Cardiac septum (tissue), 1 donor: ENCODE measurements at regions of chr4 and their contacts with region 1.

Region 1: GRCh38 chr4:169485791-169486742 is 126.3 kb downstream of the NEK1 start:
- DNase-seq: no peak

Region 2: GRCh38 chr4:169024762-169025161 is 461.3 kb before region 1 on chr4:
- intact Hi-C with region 1: loop called (anchors 5 kb)
- DNase-seq: no peak

Region 3: GRCh38 chr4:169311643-169312365 is 174.3 kb before region 1 on chr4:
- intact Hi-C with region 1: loop called (anchors 10 kb)
- DNase-seq: no peak

Region 4: GRCh38 chr4:169345194-169345787 is 140.8 kb before region 1 on chr4:
- intact Hi-C with region 1: no loop called
- DNase-seq: no peak

Region 5: DNA sequence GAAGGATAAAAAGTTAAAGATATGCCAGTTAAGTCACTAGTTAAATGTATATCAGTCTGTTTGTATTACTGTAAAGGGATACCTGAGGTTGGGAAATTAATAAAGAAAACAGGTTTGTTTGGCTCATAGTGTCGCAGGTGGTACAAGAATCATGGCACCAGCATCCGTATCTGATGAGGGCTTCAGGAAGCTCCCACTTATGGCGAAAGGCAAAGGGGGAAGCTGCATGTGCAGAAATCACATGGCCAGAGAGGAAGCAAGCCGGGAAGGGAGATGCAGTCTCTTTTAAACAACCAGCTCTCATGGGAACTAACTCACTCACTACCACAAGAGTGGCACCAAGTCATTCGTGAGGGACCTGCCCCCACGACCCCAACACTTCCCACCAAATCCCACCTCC is 123.5 kb before region 1 on chr4:
- intact Hi-C with region 1: no loop called
- DNase-seq: no peak

Region 6: GRCh38 chr4:169464080-169464479 is 22.0 kb before region 1 on chr4:
- intact Hi-C with region 1: no loop called
- DNase-seq: no peak